ENCODE measurements at regions of chr1 and their contacts with region 1.

Region 1: GRCh38 chr1:228794173-228794572 is 58.9 kb downstream of the RHOU start:
- DNase-seq: peak; percentile 60
- ATAC-seq: peak; percentile 70
- H3K4me3 Mint-ChIP-seq: no peak overlapping the region
- H3K27ac Mint-ChIP-seq: no peak overlapping the region
- H3K4me1 Mint-ChIP-seq: peaks cover 6% of the 10 kb centered on the region
- H3K27me3 Mint-ChIP-seq: no peaks in the 10 kb centered on the region

Region 2: DNA sequence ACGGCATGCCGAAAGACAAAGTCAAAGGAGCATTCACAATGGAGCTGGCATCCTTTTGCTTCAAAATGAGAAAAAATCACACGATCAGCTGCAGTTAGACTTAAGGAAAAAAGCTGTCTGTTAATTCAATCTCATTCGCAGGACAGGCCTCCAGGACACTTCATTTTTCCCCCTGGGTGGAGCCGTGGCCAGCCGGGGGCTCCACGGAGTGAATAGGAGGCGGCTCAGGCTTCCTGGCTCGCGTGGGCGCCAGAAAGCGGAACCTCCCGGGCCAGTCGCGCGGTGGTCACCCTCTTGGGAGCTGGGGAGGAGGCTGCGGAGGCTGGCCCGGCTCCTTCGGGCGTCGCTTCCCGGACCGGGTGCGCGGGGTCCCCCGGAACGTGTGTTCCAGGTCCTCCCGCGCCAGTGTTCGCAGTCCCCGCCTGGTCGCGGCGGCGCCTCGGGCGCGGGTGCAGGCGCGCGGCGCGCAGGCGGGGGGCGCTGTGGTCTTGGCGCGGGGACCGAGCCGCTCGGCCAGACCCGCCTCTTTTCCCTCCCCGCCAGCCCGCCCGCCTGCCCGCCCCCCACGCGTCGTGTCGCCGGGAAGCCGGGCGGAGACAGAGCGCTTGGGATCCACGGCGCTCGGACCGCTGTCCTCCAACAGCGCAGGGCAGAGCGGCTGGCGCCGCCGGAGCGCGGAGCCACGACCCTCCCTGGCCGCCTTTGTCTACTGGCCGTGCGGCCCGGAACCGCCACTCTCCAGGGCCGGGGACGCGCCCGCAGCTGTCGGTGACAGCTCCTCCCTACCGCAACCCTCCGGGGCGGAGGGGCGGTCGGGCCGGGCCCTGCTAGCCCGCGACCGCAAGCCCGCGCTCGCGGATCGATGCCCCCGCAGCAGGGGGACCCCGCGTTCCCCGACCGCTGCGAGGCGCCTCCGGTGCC is 59.0 kb before region 1 on chr1 and contains the start of gene RHOU:
- CTCF ChIA-PET with region 1: no interaction called
- POLR2A ChIA-PET with region 1: no interaction called
- intact Hi-C with region 1: loop called (anchors 1 to 5 kb)
- DNase-seq: peak; percentile 82
- ATAC-seq: peak; percentile 88
- H3K4me3 Mint-ChIP-seq: peak within 1 kb of the TSS; percentile 70
- H3K27ac Mint-ChIP-seq: no peak within 1 kb of the TSS
- H3K4me1 Mint-ChIP-seq: peaks cover 8% of the 10 kb centered on the region
- H3K27me3 Mint-ChIP-seq: peaks cover 10% of the 10 kb centered on the region
- total RNA-seq, gene RHOU: 1.2 TPM

Region 3: DNA sequence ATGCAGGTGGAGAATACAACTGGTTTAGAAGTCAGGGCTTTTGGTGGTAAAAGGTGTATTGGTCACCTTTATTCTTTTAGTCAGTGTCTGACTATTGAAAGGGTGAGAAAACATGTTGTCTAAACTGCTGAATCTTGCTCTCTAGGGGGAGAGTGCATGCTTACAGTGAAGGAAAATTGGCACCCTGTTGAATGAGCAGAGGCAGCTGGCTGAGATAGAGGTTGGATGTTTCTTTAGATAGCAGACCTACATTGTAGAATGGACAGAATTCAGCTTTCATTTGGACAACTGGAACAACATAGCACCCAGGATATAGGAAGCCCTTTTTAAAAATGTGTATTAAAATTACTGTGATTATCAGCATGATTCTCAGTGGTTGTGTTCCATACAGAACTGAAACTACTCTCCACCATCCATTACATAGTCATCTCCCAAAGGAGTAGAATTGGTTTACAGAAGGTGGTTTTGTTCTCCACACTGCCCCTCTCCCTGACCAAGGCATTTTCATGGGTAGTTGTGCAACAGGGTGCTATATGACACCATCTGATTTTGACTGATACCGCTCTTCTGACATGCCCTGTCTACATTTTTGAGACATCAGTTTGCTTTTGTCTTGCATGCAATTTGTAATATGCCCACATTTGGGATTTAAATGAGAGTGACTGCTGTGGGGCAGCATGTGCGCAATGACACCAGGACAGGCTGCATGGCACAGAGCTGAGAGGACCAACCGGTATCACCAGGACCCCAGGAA is 42.6 kb before region 1 on chr1:
- CTCF ChIA-PET with region 1: no interaction called
- POLR2A ChIA-PET with region 1: no interaction called
- intact Hi-C with region 1: loop called (anchors 2 kb)
- DNase-seq: peak; percentile 24
- ATAC-seq: peak; percentile 58
- H3K4me3 Mint-ChIP-seq: no peak overlapping the region
- H3K27ac Mint-ChIP-seq: no peak overlapping the region
- H3K4me1 Mint-ChIP-seq: peaks cover 16% of the 10 kb centered on the region
- H3K27me3 Mint-ChIP-seq: peaks cover 22% of the 10 kb centered on the region

Region 4: GRCh38 chr1:228804671-228805413 is 10.7 kb after region 1 on chr1:
- CTCF ChIA-PET with region 1: interaction called, 7 read pairs
- POLR2A ChIA-PET with region 1: interaction called, 7 read pairs
- intact Hi-C with region 1: loop called in 1 of 2 experiments (anchors 1 kb)
- DNase-seq: peak; percentile 72
- ATAC-seq: peak; percentile 87
- H3K4me3 Mint-ChIP-seq: no peak overlapping the region
- H3K27ac Mint-ChIP-seq: peak overlapping the region; percentile 71
- H3K4me1 Mint-ChIP-seq: peaks cover 39% of the 10 kb centered on the region
- H3K27me3 Mint-ChIP-seq: no peaks in the 10 kb centered on the region

Region 5: GRCh38 chr1:228860911-228861831 is 67.0 kb after region 1 on chr1:
- CTCF ChIA-PET with region 1: no interaction called
- POLR2A ChIA-PET with region 1: no interaction called
- intact Hi-C with region 1: loop called (anchors 1 to 2 kb)
- DNase-seq: peak; percentile 58
- ATAC-seq: peak; percentile 90
- H3K4me3 Mint-ChIP-seq: no peak overlapping the region
- H3K27ac Mint-ChIP-seq: no peak overlapping the region
- H3K4me1 Mint-ChIP-seq: peaks cover 29% of the 10 kb centered on the region
- H3K27me3 Mint-ChIP-seq: peaks cover 3% of the 10 kb centered on the region

Region 6: DNA sequence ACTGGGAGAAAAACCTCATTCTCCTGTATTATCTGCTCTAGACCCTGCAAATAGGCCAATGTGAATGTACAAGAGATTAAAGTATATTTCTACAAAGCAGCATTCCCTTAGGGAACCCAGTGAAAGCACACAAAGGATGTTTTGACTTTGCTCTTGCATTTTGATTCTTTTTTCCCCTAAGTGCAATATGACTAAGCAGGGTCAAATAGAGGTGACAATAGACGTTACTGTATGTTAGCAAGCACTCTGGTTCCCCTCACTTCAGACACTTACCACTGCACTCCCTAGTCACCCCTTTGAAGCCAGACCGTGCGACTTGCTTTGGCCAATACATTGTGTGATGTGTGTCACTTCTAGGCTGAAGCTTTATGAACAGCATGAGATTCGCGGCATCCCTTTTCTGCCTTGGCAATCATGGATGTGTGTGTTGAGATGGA is 150.8 kb after region 1 on chr1:
- CTCF ChIA-PET with region 1: no interaction called
- POLR2A ChIA-PET with region 1: no interaction called
- intact Hi-C with region 1: no loop called
- DNase-seq: peak; percentile 12
- ATAC-seq: peak; percentile 58
- H3K4me3 Mint-ChIP-seq: no peak overlapping the region
- H3K27ac Mint-ChIP-seq: no peak overlapping the region
- H3K4me1 Mint-ChIP-seq: peaks cover 2% of the 10 kb centered on the region
- H3K27me3 Mint-ChIP-seq: no peaks in the 10 kb centered on the region

Region 7: GRCh38 chr1:229258031-229258756 is 464.0 kb after region 1 on chr1:
- CTCF ChIA-PET with region 1: no interaction called
- POLR2A ChIA-PET with region 1: no interaction called
- intact Hi-C with region 1: no loop called
- DNase-seq: peak; percentile 74
- ATAC-seq: no peak
- H3K4me3 Mint-ChIP-seq: no peak overlapping the region
- H3K27ac Mint-ChIP-seq: no peak overlapping the region
- H3K4me1 Mint-ChIP-seq: peaks cover 32% of the 10 kb centered on the region
- H3K27me3 Mint-ChIP-seq: no peaks in the 10 kb centered on the region